ENCODE measurements at regions of chr17 and their contacts with region 1.

Region 1: DNA sequence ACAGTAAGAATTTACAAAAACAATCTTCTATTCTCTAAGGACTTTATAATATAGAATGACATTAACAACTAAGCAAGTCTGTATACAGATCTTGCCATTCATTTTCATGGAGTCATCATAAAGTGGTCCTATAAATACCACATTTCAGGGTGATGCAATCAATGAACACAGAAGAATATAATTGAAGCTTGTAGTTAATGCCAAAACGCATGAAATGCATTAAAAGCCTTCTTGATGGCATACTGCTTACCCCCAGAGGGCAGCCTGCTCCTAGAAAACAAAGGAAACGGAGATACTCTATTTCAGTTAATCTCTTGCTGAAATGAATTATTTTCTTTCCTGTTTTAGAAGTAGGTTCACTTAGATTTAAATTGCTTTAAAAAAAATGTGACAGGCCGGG is 45.2 kb upstream of the STAC2 start:
- DNase-seq: no peak
- ATAC-seq: no peak
- H3K4me3 ChIP-seq: no peak overlapping the region
- H3K27ac ChIP-seq: no peak overlapping the region
- H3K4me1 ChIP-seq: no peaks in the 10 kb centered on the region
- H3K27me3 ChIP-seq: no peaks in the 10 kb centered on the region
- CTCF ChIP-seq: peak in 7 of 9 donors; percentile 20 to 55 (median 45)

Region 2: DNA sequence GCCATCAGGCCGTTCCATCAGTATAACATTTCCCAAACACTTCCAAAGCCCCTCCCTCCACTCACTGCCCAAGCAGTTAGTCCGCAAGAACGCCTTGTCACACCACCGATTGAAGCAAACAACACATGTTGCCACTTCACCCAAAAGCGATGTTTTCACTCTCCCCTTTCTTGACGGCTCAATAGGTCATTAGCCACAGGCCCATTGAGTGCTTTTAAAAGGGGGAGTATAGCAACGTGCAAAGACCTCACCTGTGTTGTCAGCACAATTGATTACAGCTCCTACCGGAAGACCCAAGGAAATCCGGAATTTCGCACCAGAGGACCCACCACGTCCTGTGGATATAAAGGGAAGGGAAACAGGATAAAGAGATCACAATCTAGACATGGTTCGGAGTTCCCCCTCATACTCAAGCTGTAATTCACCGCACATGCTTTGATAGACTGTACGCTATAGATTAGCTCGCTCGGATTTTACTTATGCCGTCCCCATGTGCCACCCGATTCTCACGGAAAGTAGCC is 418.1 kb before region 1 on chr17:
- intact Hi-C with region 1: no loop called
- DNase-seq: no peak
- ATAC-seq: peak in 7 of 8 donors; percentile 2 to 52 (median 29)
- H3K4me3 ChIP-seq: peak overlapping the region; percentile 48 to 83 (median 67)
- H3K27ac ChIP-seq: peak overlapping the region in 9 of 10 donors; percentile 88 to 98 (median 94)
- H3K4me1 ChIP-seq: peaks cover 12 to 39% (median 32%) of the 10 kb centered on the region in 9 donors
- H3K27me3 ChIP-seq: no peaks in the 10 kb centered on the region
- CTCF ChIP-seq: no peak

Region 3: GRCh38 chr17:39069114-39069756 is 201.7 kb before region 1 on chr17:
- intact Hi-C with region 1: no loop called
- DNase-seq: no peak
- ATAC-seq: peak in 7 of 8 donors; percentile 37 to 64 (median 44)
- H3K4me3 ChIP-seq: no peak overlapping the region
- H3K27ac ChIP-seq: no peak overlapping the region
- H3K4me1 ChIP-seq: peaks cover 0 to 8% (median 4%) of the 10 kb centered on the region in 9 donors
- H3K27me3 ChIP-seq: no peaks in the 10 kb centered on the region
- CTCF ChIP-seq: peak; percentile 36 to 72 (median 61)

Region 4: GRCh38 chr17:39252788-39253460 is 18.0 kb before region 1 on chr17:
- intact Hi-C with region 1: no loop called
- DNase-seq: no peak
- ATAC-seq: no peak
- H3K4me3 ChIP-seq: no peak overlapping the region
- H3K27ac ChIP-seq: no peak overlapping the region
- H3K4me1 ChIP-seq: no peaks in the 10 kb centered on the region
- H3K27me3 ChIP-seq: no peaks in the 10 kb centered on the region
- CTCF ChIP-seq: no peak

Region 5: GRCh38 chr17:39401412-39402243 is 130.7 kb after region 1 on chr17 and contains the start of gene FBXL20:
- intact Hi-C with region 1: loop called in 5 of 10 experiments (anchors 5 to 10 kb)
- DNase-seq: peak; percentile 95 to 96
- ATAC-seq: peak; percentile 91 to 96 (median 94)
- H3K4me3 ChIP-seq: peak within 1 kb of the TSS; percentile 53 to 100 (median 96)
- H3K27ac ChIP-seq: peak within 1 kb of the TSS; percentile 79 to 97 (median 92)
- H3K4me1 ChIP-seq: peaks cover 3 to 41% (median 28%) of the 10 kb centered on the region in 9 donors
- H3K27me3 ChIP-seq: no peaks in the 10 kb centered on the region
- CTCF ChIP-seq: no peak
- total RNA-seq, gene FBXL20: 7.1 to 19.7 (median 15.7) TPM

Measured in heart right ventricle (tissue), 16 donors.